ENCODE measurements at regions of chr1 and their contacts with region 1.

Region 1: GRCh38 chr1:180178511-180179161 is 24.0 kb downstream of the QSOX1 start:
- DNase-seq: peak; percentile 72
- H3K4me3 Mint-ChIP-seq: no peak overlapping the region
- H3K27ac Mint-ChIP-seq: peak overlapping the region; percentile 60
- H3K4me1 Mint-ChIP-seq: peaks cover 5% of the 10 kb centered on the region
- H3K27me3 Mint-ChIP-seq: no peaks in the 10 kb centered on the region
- CTCF ChIP-seq: peak; percentile 98

Region 2: DNA sequence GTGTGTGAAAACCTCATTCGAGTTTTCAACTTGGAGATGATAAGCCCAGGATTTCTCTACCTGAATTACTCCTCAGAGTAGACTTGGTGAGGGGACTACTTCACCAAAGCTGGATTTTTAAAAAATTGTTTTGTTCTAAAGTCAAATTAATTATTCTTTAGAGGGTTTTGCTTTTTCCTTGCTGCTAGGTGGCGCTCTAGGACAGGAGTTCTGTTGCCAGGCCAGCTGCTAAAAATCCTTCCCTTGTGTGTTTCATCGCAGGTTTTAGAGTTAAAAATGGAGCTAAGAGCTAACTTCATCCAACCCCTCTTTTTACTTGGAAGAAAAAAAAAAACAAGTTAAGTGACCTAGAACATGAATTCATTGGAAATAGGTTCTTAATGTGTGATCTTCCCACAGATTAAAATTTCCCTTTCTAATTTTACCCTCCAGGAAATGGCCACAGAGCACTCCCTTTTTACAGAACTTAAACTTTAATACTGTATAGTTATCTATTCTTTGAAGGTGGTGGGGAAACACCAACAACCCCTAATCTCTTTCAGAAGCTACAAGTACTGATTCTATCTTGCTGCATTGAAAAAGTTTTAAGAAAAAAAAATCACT is 472.2 kb before region 1 on chr1:
- CTCF ChIA-PET with region 1: interaction called, 8 read pairs
- POLR2A ChIA-PET with region 1: no interaction called
- intact Hi-C with region 1: loop called (anchors 2 kb)
- DNase-seq: peak; percentile 78
- H3K4me3 Mint-ChIP-seq: no peak overlapping the region
- H3K27ac Mint-ChIP-seq: no peak overlapping the region
- H3K4me1 Mint-ChIP-seq: no peaks in the 10 kb centered on the region
- H3K27me3 Mint-ChIP-seq: peaks cover 18% of the 10 kb centered on the region
- CTCF ChIP-seq: peak; percentile 92

Region 3: DNA sequence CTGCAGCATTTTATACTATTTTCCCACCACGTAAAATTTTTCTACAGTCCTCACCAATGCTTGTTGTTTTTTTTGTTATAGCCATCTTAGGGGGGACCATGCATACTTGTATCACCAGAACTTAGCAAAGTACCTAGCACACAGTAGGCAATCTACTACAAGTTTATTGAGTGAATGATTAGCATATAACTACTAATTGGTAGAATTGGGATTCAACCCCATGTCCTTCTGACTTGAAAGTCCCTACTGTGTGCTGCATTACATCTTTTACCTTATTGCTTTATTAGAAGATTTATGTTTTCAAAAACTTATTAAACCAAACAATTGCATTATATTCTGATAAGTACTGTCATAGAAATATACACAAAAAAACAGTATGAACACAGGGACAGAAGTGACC is 132.0 kb before region 1 on chr1:
- CTCF ChIA-PET with region 1: interaction called, 12 read pairs
- POLR2A ChIA-PET with region 1: no interaction called
- intact Hi-C with region 1: no loop called
- DNase-seq: no peak
- H3K4me3 Mint-ChIP-seq: no peak overlapping the region
- H3K27ac Mint-ChIP-seq: no peak overlapping the region
- H3K4me1 Mint-ChIP-seq: peaks cover 15% of the 10 kb centered on the region
- H3K27me3 Mint-ChIP-seq: no peaks in the 10 kb centered on the region
- CTCF ChIP-seq: no peak

Region 4: DNA sequence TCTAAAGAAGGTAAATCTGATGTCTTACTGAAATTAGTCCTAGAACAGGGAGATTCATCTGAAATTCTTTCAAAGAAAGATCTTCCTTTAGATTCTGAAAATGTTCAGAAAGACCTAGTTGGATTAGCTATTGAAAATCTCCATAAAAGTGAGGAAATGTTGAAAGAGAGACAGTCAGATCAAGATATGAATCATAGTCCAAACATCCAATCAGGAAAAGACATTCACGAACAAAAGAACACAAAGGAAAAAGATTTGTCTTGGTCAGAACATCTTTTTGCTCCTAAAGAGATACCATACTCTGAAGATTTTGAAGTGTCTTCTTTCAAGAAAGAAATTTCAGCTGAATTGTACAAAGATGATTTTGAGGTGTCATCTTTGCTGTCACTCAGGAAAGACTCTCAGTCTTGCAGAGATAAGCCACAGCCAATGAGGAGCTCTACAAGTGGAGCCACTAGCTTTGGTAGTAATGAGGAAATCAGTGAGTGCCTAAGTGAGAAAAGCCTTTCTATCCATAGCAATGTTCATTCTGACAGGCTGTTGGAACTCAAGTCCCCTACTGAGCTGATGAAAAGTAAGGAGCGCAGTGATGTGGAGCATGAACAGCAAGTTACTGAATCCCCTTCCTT is 85.6 kb before region 1 on chr1:
- CTCF ChIA-PET with region 1: interaction called, 29 read pairs
- POLR2A ChIA-PET with region 1: interaction called, 6 read pairs
- intact Hi-C with region 1: no loop called
- DNase-seq: peak; percentile 16
- H3K4me3 Mint-ChIP-seq: no peak overlapping the region
- H3K27ac Mint-ChIP-seq: peak overlapping the region; percentile 42
- H3K4me1 Mint-ChIP-seq: peaks cover 7% of the 10 kb centered on the region
- H3K27me3 Mint-ChIP-seq: no peaks in the 10 kb centered on the region
- CTCF ChIP-seq: no peak

Region 5: GRCh38 chr1:180154325-180155181 is 24.1 kb before region 1 on chr1 and contains the start of gene QSOX1:
- CTCF ChIA-PET with region 1: interaction called, 17 read pairs
- POLR2A ChIA-PET with region 1: interaction called, 8 read pairs
- intact Hi-C with region 1: no loop called
- DNase-seq: peak; percentile 92
- H3K4me3 Mint-ChIP-seq: peak within 1 kb of the TSS; percentile 98
- H3K27ac Mint-ChIP-seq: peak within 1 kb of the TSS; percentile 89
- H3K4me1 Mint-ChIP-seq: peaks cover 64% of the 10 kb centered on the region
- H3K27me3 Mint-ChIP-seq: no peaks in the 10 kb centered on the region
- CTCF ChIP-seq: peak; percentile 23
- total RNA-seq, gene QSOX1: 309 and 464 TPM in 2 replicates

Region 6: DNA sequence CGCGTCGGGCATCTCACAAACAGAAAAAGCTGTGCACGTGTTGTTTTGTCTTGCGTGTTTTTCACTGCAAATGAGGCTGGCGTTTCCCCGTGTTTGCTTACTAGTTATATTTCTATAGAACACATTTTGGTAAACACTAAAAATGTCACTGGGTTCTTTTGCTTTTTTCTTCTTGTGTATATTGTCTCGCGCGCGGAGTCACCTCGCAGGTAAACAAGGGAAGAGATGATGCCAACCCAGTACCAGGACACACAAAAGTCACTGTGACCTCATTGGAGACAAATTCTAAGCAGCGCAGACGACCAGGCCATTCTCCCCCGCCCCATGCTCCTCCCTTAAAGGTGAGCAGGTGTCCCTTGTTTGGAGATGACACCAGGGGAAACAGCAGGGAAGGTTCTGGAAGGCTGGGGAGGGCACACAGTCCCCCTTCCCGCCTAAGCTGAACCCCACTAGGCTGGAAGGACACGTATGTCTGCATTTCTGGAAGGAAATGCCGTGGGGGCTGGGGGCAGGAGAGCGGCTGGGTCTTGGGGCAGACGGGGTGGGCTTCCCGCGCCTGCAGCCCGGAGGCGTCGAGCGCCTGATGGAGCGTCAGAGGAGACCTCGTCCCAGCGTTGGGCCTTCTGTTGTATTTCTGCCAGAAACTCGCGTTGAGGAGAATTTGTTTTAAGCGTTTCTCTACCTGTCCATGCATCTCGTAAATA is 50.0 kb after region 1 on chr1:
- CTCF ChIA-PET with region 1: no interaction called
- POLR2A ChIA-PET with region 1: no interaction called
- intact Hi-C with region 1: no loop called
- DNase-seq: no peak
- H3K4me3 Mint-ChIP-seq: peak overlapping the region; percentile 73
- H3K27ac Mint-ChIP-seq: no peak overlapping the region
- H3K4me1 Mint-ChIP-seq: no peaks in the 10 kb centered on the region
- H3K27me3 Mint-ChIP-seq: peaks cover 74% of the 10 kb centered on the region
- CTCF ChIP-seq: no peak

Region 7: DNA sequence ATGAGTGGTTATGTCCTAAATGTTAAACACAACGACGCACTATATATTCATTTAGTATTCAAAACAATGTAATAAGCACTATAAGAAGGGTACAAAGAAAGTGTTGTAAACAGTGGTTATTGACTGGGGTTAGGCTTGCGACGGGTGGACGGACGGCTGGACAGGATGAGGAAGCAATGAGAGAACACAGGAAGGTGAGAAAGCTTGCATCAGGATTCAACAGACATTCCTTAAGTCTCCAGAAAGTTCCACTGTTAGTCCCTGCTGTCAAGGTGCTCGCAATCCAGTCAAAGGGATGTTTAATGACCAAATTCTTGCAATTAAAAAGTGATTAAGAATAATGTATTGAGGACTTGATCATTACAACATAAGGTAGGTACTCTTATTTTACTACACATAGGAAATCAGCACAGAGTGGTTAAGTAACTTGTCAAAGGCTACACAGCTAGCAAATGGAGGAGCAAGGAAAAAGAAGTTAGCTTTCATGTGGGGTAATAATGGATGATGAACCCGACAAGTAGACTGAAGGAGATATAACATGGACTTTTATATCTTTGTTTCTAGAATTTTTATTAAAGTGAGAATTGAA is 324.7 kb after region 1 on chr1:
- CTCF ChIA-PET with region 1: no interaction called
- POLR2A ChIA-PET with region 1: no interaction called
- intact Hi-C with region 1: no loop called
- DNase-seq: peak; percentile 53
- H3K4me3 Mint-ChIP-seq: peak overlapping the region; percentile 94
- H3K27ac Mint-ChIP-seq: peak overlapping the region; percentile 97
- H3K4me1 Mint-ChIP-seq: peaks cover 33% of the 10 kb centered on the region
- H3K27me3 Mint-ChIP-seq: no peaks in the 10 kb centered on the region
- CTCF ChIP-seq: no peak

Region 8: GRCh38 chr1:180552626-180553025 is 374.0 kb after region 1 on chr1:
- CTCF ChIA-PET with region 1: no interaction called
- POLR2A ChIA-PET with region 1: no interaction called
- intact Hi-C with region 1: no loop called
- DNase-seq: no peak
- H3K4me3 Mint-ChIP-seq: no peak overlapping the region
- H3K27ac Mint-ChIP-seq: no peak overlapping the region
- H3K4me1 Mint-ChIP-seq: no peaks in the 10 kb centered on the region
- H3K27me3 Mint-ChIP-seq: no peaks in the 10 kb centered on the region
- CTCF ChIP-seq: no peak

Measured in MCF 10A (cell line).